ENCODE measurements at regions of chr9 and their contacts with region 1.

Region 1: DNA sequence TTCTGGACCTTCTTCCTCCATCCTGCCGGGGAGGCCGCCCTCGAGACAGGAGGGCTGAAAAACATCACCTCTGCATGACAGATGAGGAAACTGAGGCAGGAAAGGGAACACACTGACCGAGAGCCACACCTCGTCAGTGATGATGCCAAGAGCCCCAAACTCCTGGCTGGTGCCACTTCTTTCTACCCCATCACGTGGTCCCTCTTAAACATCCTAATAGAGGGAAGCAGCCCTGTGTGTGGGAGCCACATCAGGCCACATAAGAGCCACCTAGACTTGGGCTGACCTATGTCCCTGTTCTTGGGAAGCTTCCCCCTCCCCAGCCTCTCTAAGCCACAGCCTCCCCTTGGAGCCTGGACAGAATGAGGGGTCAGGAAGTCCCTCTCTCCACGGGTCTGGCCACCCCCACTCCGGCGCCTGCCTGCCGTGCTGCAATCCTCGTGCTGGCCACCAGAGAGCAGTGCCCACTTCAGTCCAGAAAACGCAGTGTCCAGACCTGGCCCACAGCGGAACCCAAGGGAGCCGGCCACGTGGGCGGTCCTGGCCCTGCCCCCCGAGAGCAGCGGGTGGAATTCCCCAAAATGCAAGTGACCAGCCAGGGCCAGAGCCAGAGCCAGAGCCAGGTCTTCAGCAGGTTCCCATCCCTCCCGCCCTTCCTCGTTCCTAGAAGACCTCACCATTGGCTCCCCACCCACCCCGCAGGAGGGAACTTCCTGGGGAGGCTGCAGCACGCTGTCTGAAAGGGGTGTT is 54.7 kb upstream of the SARDH start:
- DNase-seq: peak; percentile 72 to 87
- H3K4me3 ChIP-seq: no peak overlapping the region
- H3K27ac ChIP-seq: no peak overlapping the region
- H3K4me1 ChIP-seq: peaks cover 0 to 10% (median 3%) of the 10 kb centered on the region in 4 donors
- H3K27me3 ChIP-seq: no peaks in the 10 kb centered on the region
- CTCF ChIP-seq: peak; percentile 95 to 96

Region 2: DNA sequence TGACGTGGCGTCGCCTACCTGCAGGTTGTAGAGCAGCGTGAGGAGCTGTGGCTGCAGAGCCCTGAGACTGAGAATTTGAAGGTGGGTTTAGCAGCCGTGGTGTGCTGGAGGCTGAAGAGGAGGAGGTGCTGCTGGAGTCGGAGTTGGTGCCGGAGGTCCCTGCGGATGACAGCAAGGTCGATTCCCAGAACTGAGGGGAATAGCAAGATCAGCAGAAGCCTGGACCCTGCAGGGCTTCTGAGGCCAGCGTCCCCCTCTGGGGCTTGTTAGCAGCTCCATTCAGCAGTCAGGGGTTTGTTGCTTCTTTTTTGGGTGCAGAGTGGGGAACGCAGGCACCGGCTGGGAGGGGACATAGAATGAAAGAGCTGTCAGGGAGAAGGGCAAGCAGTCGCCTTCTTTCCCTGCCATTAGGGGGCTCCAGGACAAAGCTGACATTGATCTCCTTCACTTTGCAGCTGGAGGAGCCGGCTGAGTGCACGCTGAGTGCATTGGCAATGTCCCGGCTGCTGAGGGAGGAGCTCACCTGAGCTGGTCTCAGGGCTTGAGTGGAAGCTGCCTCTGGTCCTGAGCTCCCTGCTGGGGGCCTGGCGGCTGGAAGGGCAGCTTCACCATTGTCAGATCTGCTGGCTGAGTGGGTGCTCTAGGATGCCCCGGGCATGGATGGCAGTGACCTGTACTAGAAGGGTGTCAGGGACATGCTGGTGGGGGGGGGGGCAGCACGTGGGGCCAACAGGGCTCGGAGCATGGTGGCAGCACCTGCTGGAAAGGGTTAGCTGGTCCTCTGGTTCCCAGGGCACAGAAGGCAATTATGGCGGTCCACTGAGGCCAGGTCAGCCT is 604.7 kb before region 1 on chr9:
- intact Hi-C with region 1: no loop called
- DNase-seq: no peak
- H3K4me3 ChIP-seq: no peak overlapping the region
- H3K27ac ChIP-seq: no peak overlapping the region
- H3K4me1 ChIP-seq: peaks cover 0 to 3% (median 0%) of the 10 kb centered on the region in 4 donors
- H3K27me3 ChIP-seq: peaks cover 0 to 33% of the 10 kb centered on the region in 2 donors
- CTCF ChIP-seq: no peak

Region 3: DNA sequence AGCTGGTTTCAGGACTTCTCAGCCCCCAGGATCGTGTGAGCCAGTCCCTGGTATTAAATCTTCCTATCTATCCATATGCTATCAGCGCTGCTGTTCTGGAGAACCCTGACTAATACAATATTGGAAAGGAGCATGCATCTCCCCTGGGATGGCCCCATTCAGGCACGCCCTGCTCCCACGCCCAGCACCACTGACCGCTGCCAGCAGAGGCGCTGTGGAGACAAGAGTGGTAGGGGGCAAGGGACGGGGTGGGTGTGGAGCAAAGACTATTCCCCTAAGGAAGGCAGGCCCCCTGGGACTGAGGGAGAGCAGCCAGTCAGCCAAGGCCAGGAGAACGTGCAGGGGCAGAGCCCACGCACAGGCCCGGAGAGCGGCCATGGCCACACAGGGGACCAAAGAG is 83.2 kb after region 1 on chr9:
- intact Hi-C with region 1: no loop called
- DNase-seq: no peak
- H3K4me3 ChIP-seq: no peak overlapping the region
- H3K27ac ChIP-seq: no peak overlapping the region
- H3K4me1 ChIP-seq: peaks cover 0 to 11% (median 0%) of the 10 kb centered on the region in 4 donors
- H3K27me3 ChIP-seq: no peaks in the 10 kb centered on the region
- CTCF ChIP-seq: no peak

Region 4: GRCh38 chr9:133994353-133995011 is 201.6 kb after region 1 on chr9:
- intact Hi-C with region 1: loop called (anchors 2 kb)
- DNase-seq: peak; percentile 61 to 84
- H3K4me3 ChIP-seq: no peak overlapping the region
- H3K27ac ChIP-seq: no peak overlapping the region
- H3K4me1 ChIP-seq: peaks cover 7 to 36% (median 28%) of the 10 kb centered on the region in 4 donors
- H3K27me3 ChIP-seq: peaks cover 0 to 18% of the 10 kb centered on the region in 2 donors
- CTCF ChIP-seq: peak; percentile 97 to 98